ENCODE measurements at regions of chr17 and their contacts with region 1.

Region 1: DNA sequence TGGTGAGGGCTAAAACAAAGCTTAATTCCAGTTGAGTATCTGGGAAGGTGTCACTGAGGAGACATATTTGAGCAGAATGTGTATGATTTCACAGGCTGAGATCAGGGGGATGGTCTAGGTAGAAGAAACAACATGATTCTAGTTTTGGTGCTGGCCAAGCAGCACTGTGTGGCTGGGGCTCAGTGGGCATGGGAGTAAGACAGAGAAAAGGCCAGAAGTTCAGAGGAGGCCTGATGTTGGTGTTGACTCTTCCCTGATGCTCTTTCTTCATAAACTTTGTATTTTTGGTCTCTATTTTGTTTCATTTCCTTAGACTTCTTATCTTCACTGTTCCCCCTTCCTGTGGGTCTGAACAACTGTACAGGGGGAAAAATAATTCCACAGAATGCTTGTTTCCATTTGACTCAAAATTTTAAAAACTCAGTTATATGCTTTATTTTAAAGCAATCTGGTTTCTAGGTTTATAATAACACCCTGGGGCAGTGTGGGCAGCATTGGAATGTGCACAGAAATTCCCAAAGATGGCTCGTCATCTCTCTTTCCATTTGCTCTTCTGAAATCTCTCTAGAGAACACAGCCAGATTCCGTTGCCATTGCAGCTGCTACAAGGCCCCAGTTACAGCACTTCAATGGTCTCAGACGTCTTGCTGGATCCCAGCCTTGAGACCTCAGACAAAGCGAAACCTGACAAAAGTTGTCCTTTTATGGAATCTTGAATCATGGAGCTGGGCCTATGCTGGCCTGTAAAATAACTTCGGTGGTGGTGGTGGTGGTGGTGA is 68.3 kb downstream of the SNX11 start:
- DNase-seq: no peak
- ATAC-seq: no peak
- H3K4me3 ChIP-seq: no peak overlapping the region
- H3K4me3 Mint-ChIP-seq: no peak overlapping the region
- H3K27ac ChIP-seq: no peak overlapping the region
- H3K27ac Mint-ChIP-seq: peak overlapping the region in 7 of 9 donors; percentile 7 to 72 (median 33)
- H3K4me1 ChIP-seq: peaks cover 0 to 7% of the 10 kb centered on the region in 2 donors
- H3K4me1 Mint-ChIP-seq: peaks cover 24 to 63% (median 40%) of the 10 kb centered on the region in 7 donors
- H3K27me3 ChIP-seq: no peaks in the 10 kb centered on the region
- H3K27me3 Mint-ChIP-seq: no peaks in the 10 kb centered on the region

Region 2: DNA sequence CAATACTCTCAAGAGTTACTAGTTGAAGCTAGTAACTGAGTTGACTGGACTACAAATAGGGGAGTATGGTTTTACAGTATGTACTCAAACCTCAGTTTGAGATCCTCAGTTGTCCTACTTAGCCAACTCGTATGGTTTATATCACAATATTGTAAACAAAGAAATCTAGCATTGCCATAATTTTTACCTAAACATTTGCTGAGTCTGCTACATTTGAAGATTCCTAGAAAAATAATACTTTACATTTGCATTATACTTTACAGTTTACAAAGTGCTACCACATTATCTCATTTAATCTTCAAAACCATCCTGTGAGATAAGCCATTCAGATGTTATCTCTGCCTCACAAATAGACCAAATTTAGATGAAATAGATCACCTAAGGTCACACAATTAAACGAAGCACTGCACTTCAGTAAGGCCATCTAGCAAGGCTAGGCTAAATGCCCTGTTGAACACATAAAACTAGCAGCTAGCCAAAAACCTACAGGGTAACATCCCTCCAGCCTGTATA is 90.9 kb before region 1 on chr17:
- CTCF ChIA-PET with region 1: interaction called, 4 read pairs
- POLR2A ChIA-PET with region 1: no interaction called
- intact Hi-C with region 1: loop called in 1 of 2 experiments (anchors 10 kb)
- DNase-seq: no peak
- ATAC-seq: no peak
- H3K4me3 ChIP-seq: no peak overlapping the region
- H3K4me3 Mint-ChIP-seq: no peak overlapping the region
- H3K27ac ChIP-seq: no peak overlapping the region
- H3K27ac Mint-ChIP-seq: no peak overlapping the region
- H3K4me1 ChIP-seq: no peaks in the 10 kb centered on the region
- H3K4me1 Mint-ChIP-seq: peaks cover 0 to 20% (median 10%) of the 10 kb centered on the region in 7 donors
- H3K27me3 ChIP-seq: no peaks in the 10 kb centered on the region
- H3K27me3 Mint-ChIP-seq: no peaks in the 10 kb centered on the region

Region 3: DNA sequence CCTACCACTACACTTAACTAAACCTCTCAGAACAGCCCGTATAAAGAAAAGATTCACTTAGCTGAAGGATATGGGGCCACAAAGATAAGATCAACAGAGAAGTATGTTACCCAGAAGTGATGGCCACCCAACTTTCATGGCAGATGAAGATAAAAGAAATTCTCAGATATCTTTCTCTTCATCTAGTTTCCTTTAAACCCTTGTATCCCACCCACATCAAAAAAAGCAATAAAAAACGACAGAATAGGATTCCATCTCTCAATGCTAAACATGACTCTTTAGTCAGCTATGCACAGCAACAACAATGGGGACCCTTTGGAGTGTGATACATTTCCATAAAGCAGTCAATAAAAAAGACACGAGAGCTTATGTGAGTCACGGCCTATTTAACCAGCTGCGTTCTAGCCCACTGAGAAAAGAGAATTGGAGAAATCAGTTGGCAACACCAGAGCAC is 18.2 kb after region 1 on chr17:
- CTCF ChIA-PET with region 1: interaction called, 3 read pairs
- POLR2A ChIA-PET with region 1: no interaction called
- intact Hi-C with region 1: loop called in 1 of 2 experiments (anchors 2 kb)
- DNase-seq: peak in 6 of 9 donors; percentile 6 to 42 (median 22)
- ATAC-seq: peak; percentile 84
- H3K4me3 ChIP-seq: no peak overlapping the region
- H3K4me3 Mint-ChIP-seq: peak overlapping the region; percentile 11 to 66 (median 45)
- H3K27ac ChIP-seq: no peak overlapping the region
- H3K27ac Mint-ChIP-seq: peak overlapping the region; percentile 3 to 83 (median 63)
- H3K4me1 ChIP-seq: peaks cover 15 to 16% of the 10 kb centered on the region in 2 donors
- H3K4me1 Mint-ChIP-seq: peaks cover 29 to 58% (median 48%) of the 10 kb centered on the region in 7 donors
- H3K27me3 ChIP-seq: no peaks in the 10 kb centered on the region
- H3K27me3 Mint-ChIP-seq: no peaks in the 10 kb centered on the region

Region 4: GRCh38 chr17:49659661-49660382 is 1483.9 kb after region 1 on chr17:
- CTCF ChIA-PET with region 1: no interaction called
- POLR2A ChIA-PET with region 1: no interaction called
- intact Hi-C with region 1: no loop called
- DNase-seq: no peak
- ATAC-seq: no peak
- H3K4me3 ChIP-seq: no peak overlapping the region
- H3K4me3 Mint-ChIP-seq: peak overlapping the region in 8 of 10 donors; percentile 2 to 51 (median 24)
- H3K27ac ChIP-seq: no peak overlapping the region
- H3K27ac Mint-ChIP-seq: peak overlapping the region in 4 of 9 donors; percentile 23 to 63 (median 58)
- H3K4me1 ChIP-seq: peaks cover 1 to 9% of the 10 kb centered on the region in 2 donors
- H3K4me1 Mint-ChIP-seq: peaks cover 28 to 72% (median 64%) of the 10 kb centered on the region in 7 donors
- H3K27me3 ChIP-seq: no peaks in the 10 kb centered on the region
- H3K27me3 Mint-ChIP-seq: no peaks in the 10 kb centered on the region

Measured in naive thymus-derived CD4-positive, alpha-beta T cell (primary cell).